CD8-positive, alpha-beta T cell (primary cell): ENCODE measurements at regions of chr3 and their contacts with region 1.

Region 1: GRCh38 chr3:196568246-196569002 is at the starts of genes FBXO45 and WDR53:
- DNase-seq: peak; percentile 88 to 98 (median 95)
- ATAC-seq: peak; percentile 92
- H3K4me3 ChIP-seq: peak within 1 kb of the TSS; percentile 80
- H3K4me3 Mint-ChIP-seq: peak within 1 kb of the TSS; percentile 99
- H3K27ac ChIP-seq: peak within 1 kb of the TSS; percentile 86 to 91
- H3K27ac Mint-ChIP-seq: peak within 1 kb of the TSS; percentile 98
- H3K4me1 ChIP-seq: peaks cover 26% of the 10 kb centered on the region
- H3K4me1 Mint-ChIP-seq: peaks cover 43% of the 10 kb centered on the region
- H3K27me3 ChIP-seq: no peaks in the 10 kb centered on the region
- H3K27me3 Mint-ChIP-seq: no peaks in the 10 kb centered on the region
- CTCF ChIP-seq: no peak
- total RNA-seq, gene FBXO45: 7.8 to 9.3 TPM
- total RNA-seq, gene WDR53: 15.7 to 17.5 TPM

Region 2: GRCh38 chr3:196073188-196073838 is 495.1 kb before region 1 on chr3:
- CTCF ChIA-PET with region 1: no interaction called
- POLR2A ChIA-PET with region 1: no interaction called
- intact Hi-C with region 1: loop called in 1 of 2 experiments (anchors 2 kb)
- DNase-seq: peak; percentile 45 to 87 (median 70)
- ATAC-seq: peak; percentile 98
- H3K4me3 ChIP-seq: no peak overlapping the region
- H3K4me3 Mint-ChIP-seq: no peak overlapping the region
- H3K27ac ChIP-seq: no peak overlapping the region
- H3K27ac Mint-ChIP-seq: peak overlapping the region; percentile 29
- H3K4me1 ChIP-seq: no peaks in the 10 kb centered on the region
- H3K4me1 Mint-ChIP-seq: peaks cover 19% of the 10 kb centered on the region
- H3K27me3 ChIP-seq: no peaks in the 10 kb centered on the region
- H3K27me3 Mint-ChIP-seq: no peaks in the 10 kb centered on the region
- CTCF ChIP-seq: peak; percentile 63

Region 3: DNA sequence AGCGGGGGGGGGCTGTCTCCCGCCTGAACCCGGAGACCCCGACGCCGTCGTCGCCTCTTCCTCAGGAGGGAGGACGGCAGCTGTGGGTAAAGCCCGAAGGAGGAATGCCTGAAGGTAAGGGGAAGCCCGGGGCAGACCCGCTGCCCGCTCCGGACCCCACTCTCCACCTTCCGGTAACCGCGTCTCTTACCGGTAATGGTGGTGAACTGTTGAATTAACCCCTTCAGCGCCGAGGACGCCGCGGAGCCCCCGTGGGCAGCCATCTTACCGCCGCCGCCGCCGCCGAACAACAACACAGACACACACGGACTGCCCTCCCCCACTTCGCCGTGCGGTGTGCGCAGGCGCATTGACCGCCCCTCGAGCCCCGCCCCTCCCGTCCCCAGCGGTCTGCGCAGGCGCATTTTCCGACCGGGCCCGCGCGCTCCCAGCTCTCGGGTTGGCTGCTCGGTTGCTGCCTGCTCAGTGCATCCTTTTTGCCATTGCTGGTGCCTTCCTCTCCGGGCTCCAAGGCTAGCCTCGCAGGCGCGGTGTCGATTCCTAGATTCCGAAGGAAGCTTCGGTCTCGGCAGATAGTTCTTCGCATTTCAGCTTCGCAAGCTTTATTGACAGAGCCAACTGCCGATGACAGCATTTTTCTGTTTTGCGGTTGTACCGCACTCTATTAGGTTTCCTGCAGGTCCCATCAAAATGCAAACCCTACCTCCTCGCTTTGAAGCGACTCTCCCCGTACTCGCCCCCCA is 136.1 kb before region 1 on chr3 and contains the start of gene UBXN7:
- CTCF ChIA-PET with region 1: no interaction called
- POLR2A ChIA-PET with region 1: no interaction called
- intact Hi-C with region 1: loop called (anchors 1 kb)
- DNase-seq: peak; percentile 94 to 99 (median 97)
- ATAC-seq: peak; percentile 86
- H3K4me3 ChIP-seq: peak within 1 kb of the TSS; percentile 60 to 77
- H3K4me3 Mint-ChIP-seq: peak within 1 kb of the TSS; percentile 76
- H3K27ac ChIP-seq: peak within 1 kb of the TSS; percentile 80 to 85
- H3K27ac Mint-ChIP-seq: peak within 1 kb of the TSS; percentile 97
- H3K4me1 ChIP-seq: peaks cover 13% of the 10 kb centered on the region
- H3K4me1 Mint-ChIP-seq: peaks cover 29% of the 10 kb centered on the region
- H3K27me3 ChIP-seq: no peaks in the 10 kb centered on the region
- H3K27me3 Mint-ChIP-seq: no peaks in the 10 kb centered on the region
- CTCF ChIP-seq: no peak
- total RNA-seq, gene UBXN7: 72.5 to 80.1 TPM

Region 4: DNA sequence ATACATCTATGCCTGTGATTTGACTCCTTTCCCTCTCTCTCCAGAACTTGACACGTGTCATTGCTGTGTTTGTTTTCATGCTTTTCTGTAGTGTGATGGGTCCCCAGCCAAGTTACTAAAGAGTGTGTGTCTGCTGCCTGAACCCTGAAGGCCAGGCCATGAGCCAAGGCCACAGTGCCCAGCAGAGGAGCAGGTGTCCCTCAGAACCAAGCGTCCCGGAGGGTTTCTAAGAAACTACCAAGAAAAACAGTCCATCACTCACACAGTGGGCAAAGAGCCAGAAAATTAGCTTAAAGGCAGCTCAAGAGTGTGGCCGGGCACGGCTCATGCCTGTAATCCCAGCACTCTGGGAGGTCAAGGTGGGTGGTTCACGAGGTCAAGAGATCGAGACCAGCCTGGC is 35.3 kb after region 1 on chr3:
- CTCF ChIA-PET with region 1: interaction called, 10 read pairs
- POLR2A ChIA-PET with region 1: interaction called, 16 read pairs
- intact Hi-C with region 1: loop called in 1 of 2 experiments (anchors 2 kb)
- DNase-seq: peak in 1 of 9 experiments; percentile 25
- ATAC-seq: no peak
- H3K4me3 ChIP-seq: no peak overlapping the region
- H3K4me3 Mint-ChIP-seq: no peak overlapping the region
- H3K27ac ChIP-seq: no peak overlapping the region
- H3K27ac Mint-ChIP-seq: no peak overlapping the region
- H3K4me1 ChIP-seq: peaks cover 3% of the 10 kb centered on the region
- H3K4me1 Mint-ChIP-seq: peaks cover 18% of the 10 kb centered on the region
- H3K27me3 ChIP-seq: no peaks in the 10 kb centered on the region
- H3K27me3 Mint-ChIP-seq: no peaks in the 10 kb centered on the region
- CTCF ChIP-seq: no peak

Region 5: DNA sequence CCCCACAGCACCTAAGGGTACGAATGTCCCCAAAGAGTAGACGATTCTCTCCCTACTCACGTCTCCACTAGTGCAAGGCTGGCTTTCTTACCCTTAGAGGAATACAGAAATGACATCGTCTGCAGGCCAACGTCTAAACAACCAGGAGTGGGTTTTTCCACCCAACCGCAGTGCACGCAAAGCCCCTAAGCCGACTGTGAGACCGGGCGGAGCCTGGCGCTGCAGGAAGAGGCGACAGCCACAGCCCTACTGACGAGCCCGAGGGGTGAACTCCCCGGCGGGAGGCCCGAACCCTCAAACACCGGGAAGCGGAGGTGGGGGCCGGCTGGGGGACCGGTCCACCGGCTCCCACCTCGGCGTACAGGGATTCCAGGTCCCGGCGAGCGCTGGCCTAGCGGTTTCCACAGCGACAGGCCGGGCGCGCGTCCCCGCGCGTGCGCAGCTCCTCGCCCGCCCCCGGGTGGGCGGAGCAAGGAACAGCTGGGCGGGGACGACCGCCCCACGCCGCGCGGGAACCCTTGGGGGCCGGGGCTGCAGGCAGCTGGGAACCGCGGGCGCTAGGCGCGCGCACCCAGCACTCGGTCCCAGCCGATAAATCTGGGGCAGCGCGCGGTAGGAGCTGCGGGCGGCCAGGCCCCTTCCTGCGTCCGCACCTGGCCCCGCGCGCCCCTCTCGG is 143.6 kb after region 1 on chr3 and contains the starts of genes CEP19 and PIGX:
- CTCF ChIA-PET with region 1: no interaction called
- POLR2A ChIA-PET with region 1: interaction called, 3 read pairs
- intact Hi-C with region 1: loop called (anchors 1 kb)
- DNase-seq: peak; percentile 77 to 99 (median 91)
- ATAC-seq: peak; percentile 83
- H3K4me3 ChIP-seq: peak within 1 kb of the TSS; percentile 72 to 93
- H3K4me3 Mint-ChIP-seq: peak within 1 kb of the TSS; percentile 88
- H3K27ac ChIP-seq: peak within 1 kb of the TSS; percentile 90 to 98
- H3K27ac Mint-ChIP-seq: peak within 1 kb of the TSS; percentile 98
- H3K4me1 ChIP-seq: peaks cover 17% of the 10 kb centered on the region
- H3K4me1 Mint-ChIP-seq: peaks cover 31% of the 10 kb centered on the region
- H3K27me3 ChIP-seq: no peaks in the 10 kb centered on the region
- H3K27me3 Mint-ChIP-seq: no peaks in the 10 kb centered on the region
- CTCF ChIP-seq: no peak
- total RNA-seq, gene CEP19: 0.39 to 0.41 TPM
- total RNA-seq, gene PIGX: 12.0 to 12.2 TPM

Region 6: DNA sequence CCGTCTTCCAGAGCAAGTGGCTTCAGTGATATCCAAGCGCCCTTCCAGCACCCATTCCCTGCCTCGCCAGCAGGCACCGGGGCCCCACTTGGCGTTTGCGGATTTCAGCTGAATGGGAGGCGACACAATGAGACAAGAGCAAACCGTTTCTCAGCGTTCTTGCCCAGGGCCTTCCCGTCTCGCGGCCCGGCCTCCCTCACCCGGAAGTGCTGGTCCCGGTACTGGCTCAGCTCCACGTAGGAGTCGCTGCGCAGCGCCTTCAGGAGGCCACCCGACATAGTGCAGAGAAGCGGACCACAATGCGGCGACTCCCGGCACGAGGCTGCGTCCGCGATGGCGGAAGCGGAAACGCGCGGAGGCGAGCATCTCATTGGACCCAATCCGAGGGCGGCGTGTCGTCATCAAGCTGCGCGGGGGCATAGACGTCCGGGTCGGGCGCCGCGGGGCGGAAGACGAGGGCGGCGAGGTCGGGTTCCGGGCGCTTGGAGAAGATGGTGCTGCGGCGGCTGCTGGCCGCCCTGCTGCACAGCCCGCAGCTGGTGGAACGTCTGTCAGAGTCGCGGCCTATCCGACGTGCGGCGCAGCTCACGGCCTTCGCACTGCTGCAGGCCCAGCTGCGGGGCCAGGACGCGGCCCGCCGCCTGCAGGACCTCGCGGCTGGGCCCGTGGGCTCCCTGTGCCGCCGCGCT is 373.9 kb after region 1 on chr3 and contains the start of gene NCBP2:
- CTCF ChIA-PET with region 1: no interaction called
- POLR2A ChIA-PET with region 1: interaction called, 9 read pairs
- intact Hi-C with region 1: loop called in 1 of 2 experiments (anchors 1 kb)
- DNase-seq: peak; percentile 98 to 100 (median 100)
- ATAC-seq: peak; percentile 91
- H3K4me3 ChIP-seq: peak within 1 kb of the TSS; percentile 87 to 91
- H3K4me3 Mint-ChIP-seq: peak within 1 kb of the TSS; percentile 90
- H3K27ac ChIP-seq: peak within 1 kb of the TSS; percentile 95 to 96
- H3K27ac Mint-ChIP-seq: peak within 1 kb of the TSS; percentile 97
- H3K4me1 ChIP-seq: peaks cover 18% of the 10 kb centered on the region
- H3K4me1 Mint-ChIP-seq: peaks cover 44% of the 10 kb centered on the region
- H3K27me3 ChIP-seq: no peaks in the 10 kb centered on the region
- H3K27me3 Mint-ChIP-seq: no peaks in the 10 kb centered on the region
- CTCF ChIP-seq: peak; percentile 59
- total RNA-seq, gene NCBP2: 40.4 to 42.9 TPM